H1 (cell line): ENCODE measurements at regions of chr1 and their contacts with region 1.

Region 1: DNA sequence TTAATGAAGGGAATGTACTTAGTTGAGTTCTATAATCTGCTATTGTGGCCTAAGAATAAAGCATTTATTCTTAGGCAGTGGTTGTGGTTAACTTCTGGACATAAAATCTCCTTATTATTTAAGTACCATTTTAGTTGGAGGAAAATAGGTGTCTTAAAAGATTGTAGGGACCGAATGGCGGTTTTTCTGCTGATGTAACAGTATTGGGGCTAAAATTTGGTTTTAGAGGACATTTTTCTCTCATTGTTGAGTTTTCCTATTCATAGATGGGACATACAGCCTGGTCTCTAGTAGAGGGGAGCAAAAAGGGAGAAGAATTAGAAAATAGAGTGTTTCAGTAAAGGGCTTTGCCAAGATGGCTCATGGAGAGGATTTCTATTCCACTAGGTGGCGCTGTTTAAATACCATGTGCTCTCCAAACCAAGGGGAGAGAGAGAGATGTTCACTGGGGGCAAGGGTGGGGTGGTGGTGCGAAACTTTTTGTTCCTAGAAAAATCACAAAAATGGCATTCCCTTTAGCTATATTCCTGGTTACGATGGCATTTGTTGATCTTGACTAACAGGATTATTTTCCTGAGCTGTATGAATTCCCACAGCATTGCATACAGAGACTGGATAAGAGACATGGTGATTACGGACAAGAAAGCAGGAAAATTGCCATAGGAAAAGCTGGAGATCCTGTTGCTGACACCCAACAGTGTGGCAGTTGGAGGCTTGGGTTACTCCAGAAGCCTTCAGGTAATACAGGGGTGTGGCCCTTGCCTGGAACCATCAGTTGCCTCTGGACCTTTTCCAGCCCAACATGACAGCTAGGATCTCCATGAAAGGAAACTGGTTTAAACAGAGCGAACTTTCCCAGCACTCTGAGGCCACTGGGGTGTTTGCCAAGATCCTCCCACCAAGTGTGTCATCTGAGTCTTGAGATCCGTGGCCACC is 18.2 kb upstream of the FCGR2A start:
- DNase-seq: no peak
- H3K4me3 ChIP-seq: no peak overlapping the region
- H3K27ac ChIP-seq: no peak overlapping the region
- H3K4me1 ChIP-seq: no peaks in the 10 kb centered on the region
- H3K27me3 ChIP-seq: peaks cover 0 to under 1% (median 0%) of the 10 kb centered on the region in 4 experiments; a peak in 2 of 7 replicates
- CTCF ChIP-seq: peak in 2 of 3 experiments; percentile 65; a peak in 3 of 4 replicates
- EP300 ChIP-seq: no peak
- POLR2A ChIP-seq: no peak
- RAD21 ChIP-seq: peak; percentile 79 to 80

Region 2: GRCh38 chr1:161242313-161242712 is 244.8 kb before region 1 on chr1:
- CTCF ChIA-PET with region 1: no interaction called
- POLR2A ChIA-PET with region 1: no interaction called
- DNase-seq: no peak
- H3K4me3 ChIP-seq: no peak overlapping the region
- H3K27ac ChIP-seq: no peak overlapping the region
- H3K4me1 ChIP-seq: no peaks in the 10 kb centered on the region
- H3K27me3 ChIP-seq: no peaks in the 10 kb centered on the region
- CTCF ChIP-seq: no peak
- EP300 ChIP-seq: no peak
- POLR2A ChIP-seq: no peak
- RAD21 ChIP-seq: no peak

Region 3: GRCh38 chr1:161335796-161336195 is 151.3 kb before region 1 on chr1:
- CTCF ChIA-PET with region 1: no interaction called
- POLR2A ChIA-PET with region 1: no interaction called
- DNase-seq: no peak
- H3K4me3 ChIP-seq: no peak overlapping the region
- H3K27ac ChIP-seq: no peak overlapping the region
- H3K4me1 ChIP-seq: no peaks in the 10 kb centered on the region
- H3K27me3 ChIP-seq: no peaks in the 10 kb centered on the region
- CTCF ChIP-seq: no peak
- EP300 ChIP-seq: no peak
- POLR2A ChIP-seq: no peak
- RAD21 ChIP-seq: no peak

Region 4: DNA sequence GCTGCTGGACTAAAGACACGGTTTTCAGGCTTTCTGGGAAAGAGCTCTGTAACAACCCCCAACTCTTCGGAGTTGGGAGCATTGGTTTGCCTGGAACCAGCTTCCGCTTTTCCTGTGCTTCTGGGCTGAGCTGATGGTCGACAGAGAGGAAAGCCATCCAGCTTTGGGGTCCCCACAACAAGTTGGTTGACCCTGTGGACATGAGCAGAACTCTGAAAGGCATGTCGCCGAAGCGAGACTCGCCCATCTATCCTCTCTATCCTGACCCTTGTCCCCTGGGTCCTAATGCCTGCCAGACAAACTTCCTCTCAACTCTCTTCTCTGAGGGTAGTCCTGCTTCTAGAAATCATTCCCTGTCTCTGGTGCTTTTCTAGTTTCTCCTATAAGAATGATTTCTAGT is 13.7 kb before region 1 on chr1:
- CTCF ChIA-PET with region 1: interaction called, 19 read pairs
- POLR2A ChIA-PET with region 1: no interaction called
- DNase-seq: peak in 1 of 2 experiments; percentile 70
- H3K4me3 ChIP-seq: peak overlapping the region; percentile 51 to 66 (median 56)
- H3K27ac ChIP-seq: no peak overlapping the region
- H3K4me1 ChIP-seq: peaks cover 0 to 4% (median under 1%) of the 10 kb centered on the region in 4 experiments; a peak in 2 of 7 replicates
- H3K27me3 ChIP-seq: peaks cover 5 to 15% (median 14%) of the 10 kb centered on the region in 4 experiments
- CTCF ChIP-seq: no peak
- EP300 ChIP-seq: no peak
- POLR2A ChIP-seq: no peak
- RAD21 ChIP-seq: no peak

Region 5: DNA sequence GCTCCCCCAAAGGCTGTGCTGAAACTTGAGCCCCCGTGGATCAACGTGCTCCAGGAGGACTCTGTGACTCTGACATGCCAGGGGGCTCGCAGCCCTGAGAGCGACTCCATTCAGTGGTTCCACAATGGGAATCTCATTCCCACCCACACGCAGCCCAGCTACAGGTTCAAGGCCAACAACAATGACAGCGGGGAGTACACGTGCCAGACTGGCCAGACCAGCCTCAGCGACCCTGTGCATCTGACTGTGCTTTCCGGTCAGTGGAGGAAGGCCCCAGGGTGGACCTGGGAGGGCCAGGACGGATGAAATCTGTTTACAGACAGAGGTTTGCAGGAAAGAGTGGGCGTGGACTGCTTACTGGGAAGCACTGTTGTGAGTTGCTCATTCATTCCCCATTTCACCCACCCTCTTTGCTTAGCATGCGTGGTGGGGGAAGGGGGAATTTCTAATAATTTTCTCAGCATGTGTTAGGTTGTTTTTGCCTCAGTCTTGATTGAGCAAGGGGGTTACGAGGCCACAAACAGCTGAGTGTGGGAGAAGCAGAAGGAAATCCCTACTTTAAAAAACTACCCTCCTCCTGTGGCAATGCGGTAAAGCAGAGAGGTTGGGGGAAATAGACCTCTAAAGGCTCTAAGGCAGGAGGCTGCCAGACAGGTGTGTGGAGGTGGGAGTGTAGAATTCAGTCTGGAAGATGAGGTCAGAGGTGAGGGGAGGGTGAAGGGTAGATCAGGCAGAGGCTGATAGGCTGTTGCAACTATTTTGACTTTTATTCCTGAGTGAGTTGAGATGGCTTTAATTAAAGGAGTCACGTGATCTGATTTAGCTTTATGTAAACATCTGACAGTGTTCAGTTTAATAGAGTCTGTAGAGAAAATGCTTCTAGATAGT is 19.5 kb after region 1 on chr1:
- CTCF ChIA-PET with region 1: interaction called, 14 read pairs
- POLR2A ChIA-PET with region 1: no interaction called
- DNase-seq: no peak
- H3K4me3 ChIP-seq: no peak overlapping the region
- H3K27ac ChIP-seq: no peak overlapping the region
- H3K4me1 ChIP-seq: peaks cover 0 to 6% (median 0%) of the 10 kb centered on the region in 4 experiments; a peak in 3 of 7 replicates
- H3K27me3 ChIP-seq: no peaks in the 10 kb centered on the region; a peak in 1 of 7 replicates
- CTCF ChIP-seq: no peak
- EP300 ChIP-seq: no peak
- POLR2A ChIP-seq: no peak
- RAD21 ChIP-seq: no peak

Region 6: DNA sequence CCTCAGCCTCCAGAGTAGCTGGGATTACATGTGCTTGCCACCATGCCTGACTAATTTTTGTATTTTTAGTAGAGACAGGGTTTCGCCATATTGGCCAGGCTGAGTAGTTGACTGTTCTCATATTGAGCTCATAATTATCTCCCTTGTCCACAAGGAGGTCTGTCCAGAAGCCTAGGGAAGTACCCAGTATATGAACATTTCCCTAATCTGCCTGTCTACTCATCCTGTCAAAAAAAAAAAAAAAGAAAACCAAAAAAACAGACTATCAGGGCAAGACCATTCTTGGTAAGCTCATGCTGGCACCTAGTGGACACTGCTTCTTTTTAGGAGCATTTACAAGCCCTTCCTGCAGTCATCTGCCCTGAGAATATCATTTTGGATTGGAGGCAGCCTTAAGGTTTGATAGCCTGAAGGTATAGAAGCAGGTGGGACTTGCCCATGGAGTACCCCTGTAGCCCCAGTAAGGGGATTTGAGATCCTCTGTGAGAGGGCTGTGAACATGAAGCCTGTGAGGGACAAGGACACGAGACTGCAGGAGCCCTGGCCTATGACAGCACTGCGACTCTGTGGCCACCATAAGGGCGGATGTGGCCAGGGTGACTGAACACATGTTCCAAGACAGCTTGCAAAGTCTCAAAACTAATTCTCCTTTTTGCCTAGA is 251.7 kb after region 1 on chr1:
- CTCF ChIA-PET with region 1: interaction called, 69 read pairs
- POLR2A ChIA-PET with region 1: no interaction called
- DNase-seq: no peak
- H3K4me3 ChIP-seq: no peak overlapping the region
- H3K27ac ChIP-seq: no peak overlapping the region
- H3K4me1 ChIP-seq: peaks cover 1 to 14% (median 4%) of the 10 kb centered on the region in 4 experiments; a peak in 4 of 7 replicates
- H3K27me3 ChIP-seq: no peaks in the 10 kb centered on the region
- CTCF ChIP-seq: peak in 2 of 3 experiments; percentile 61 to 72; a peak in 3 of 4 replicates
- EP300 ChIP-seq: no peak
- POLR2A ChIP-seq: no peak
- RAD21 ChIP-seq: peak; percentile 89 to 92